ENCODE measurements at regions of chr4 and their contacts with region 1.

Region 1: DNA sequence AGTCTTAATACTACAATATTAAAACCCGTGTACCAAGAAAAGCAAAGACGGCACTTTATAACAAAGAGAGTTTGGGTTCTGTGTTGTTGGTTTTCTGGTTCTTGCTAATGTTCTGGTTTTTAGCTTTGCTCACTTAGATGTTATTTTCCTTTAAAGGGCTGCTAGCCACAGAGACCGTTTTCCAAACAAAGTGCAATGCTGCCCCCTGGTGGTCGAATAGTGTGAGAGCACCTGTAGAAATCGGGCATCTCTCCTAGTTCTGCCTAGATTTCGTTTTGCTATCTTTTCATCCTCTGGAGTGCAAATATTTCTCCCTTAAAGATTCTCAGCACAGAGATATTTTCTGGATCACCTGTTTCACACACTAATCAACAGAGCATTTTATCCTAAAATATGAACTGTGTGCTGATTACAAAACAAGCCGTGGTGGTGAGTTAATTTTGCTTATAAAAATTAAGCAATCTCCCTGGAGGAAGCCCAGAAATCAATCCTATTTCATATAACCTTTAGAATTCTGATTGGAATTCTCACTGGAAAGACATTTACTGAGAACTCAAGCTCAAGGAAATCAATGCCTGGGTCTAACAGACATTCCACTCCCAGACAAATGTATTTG is 334.5 kb upstream of the NOCT start:
- DNase-seq: peak; percentile 50
- H3K4me3 Mint-ChIP-seq: no peak overlapping the region
- H3K27ac Mint-ChIP-seq: no peak overlapping the region
- H3K4me1 Mint-ChIP-seq: no peaks in the 10 kb centered on the region
- H3K27me3 Mint-ChIP-seq: peaks cover 15% of the 10 kb centered on the region

Region 2: DNA sequence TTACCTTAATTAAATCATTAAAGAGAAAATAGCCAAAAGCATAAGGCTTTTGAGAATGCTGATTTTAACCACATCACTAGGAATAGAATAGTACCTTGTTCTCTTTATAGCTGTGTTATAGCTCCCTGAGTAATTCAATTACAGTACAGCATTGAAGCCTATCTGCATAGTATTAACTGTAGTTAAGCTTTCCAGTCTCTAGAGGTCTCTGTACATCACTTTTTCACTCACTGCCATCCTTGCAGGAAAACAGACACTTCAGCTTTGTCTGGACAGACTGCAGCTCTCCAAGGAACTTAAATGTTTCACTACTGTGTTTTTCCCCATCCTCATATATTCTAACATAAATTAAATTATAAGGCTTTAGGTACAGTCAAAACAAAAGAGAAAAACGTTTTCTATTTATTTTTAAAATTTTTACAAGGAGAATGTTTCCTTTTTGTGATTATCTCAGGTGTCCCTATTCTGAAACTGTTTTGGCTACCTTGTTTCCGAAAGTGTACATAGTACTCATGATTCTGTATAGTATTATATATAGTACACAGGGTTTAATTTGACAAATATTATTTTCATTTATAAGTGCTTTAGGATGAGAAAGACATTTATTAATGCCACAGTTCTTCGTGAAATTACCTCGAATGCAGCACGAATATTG is 1556.7 kb before region 1 on chr4:
- intact Hi-C with region 1: loop called (anchors 2 kb)
- DNase-seq: no peak
- H3K4me3 Mint-ChIP-seq: no peak overlapping the region
- H3K27ac Mint-ChIP-seq: no peak overlapping the region
- H3K4me1 Mint-ChIP-seq: no peaks in the 10 kb centered on the region
- H3K27me3 Mint-ChIP-seq: no peaks in the 10 kb centered on the region

Region 3: GRCh38 chr4:137819964-137820383 is 861.1 kb before region 1 on chr4:
- intact Hi-C with region 1: loop called (anchors 5 kb)
- DNase-seq: no peak
- H3K4me3 Mint-ChIP-seq: no peak overlapping the region
- H3K27ac Mint-ChIP-seq: no peak overlapping the region
- H3K4me1 Mint-ChIP-seq: no peaks in the 10 kb centered on the region
- H3K27me3 Mint-ChIP-seq: no peaks in the 10 kb centered on the region

Region 4: DNA sequence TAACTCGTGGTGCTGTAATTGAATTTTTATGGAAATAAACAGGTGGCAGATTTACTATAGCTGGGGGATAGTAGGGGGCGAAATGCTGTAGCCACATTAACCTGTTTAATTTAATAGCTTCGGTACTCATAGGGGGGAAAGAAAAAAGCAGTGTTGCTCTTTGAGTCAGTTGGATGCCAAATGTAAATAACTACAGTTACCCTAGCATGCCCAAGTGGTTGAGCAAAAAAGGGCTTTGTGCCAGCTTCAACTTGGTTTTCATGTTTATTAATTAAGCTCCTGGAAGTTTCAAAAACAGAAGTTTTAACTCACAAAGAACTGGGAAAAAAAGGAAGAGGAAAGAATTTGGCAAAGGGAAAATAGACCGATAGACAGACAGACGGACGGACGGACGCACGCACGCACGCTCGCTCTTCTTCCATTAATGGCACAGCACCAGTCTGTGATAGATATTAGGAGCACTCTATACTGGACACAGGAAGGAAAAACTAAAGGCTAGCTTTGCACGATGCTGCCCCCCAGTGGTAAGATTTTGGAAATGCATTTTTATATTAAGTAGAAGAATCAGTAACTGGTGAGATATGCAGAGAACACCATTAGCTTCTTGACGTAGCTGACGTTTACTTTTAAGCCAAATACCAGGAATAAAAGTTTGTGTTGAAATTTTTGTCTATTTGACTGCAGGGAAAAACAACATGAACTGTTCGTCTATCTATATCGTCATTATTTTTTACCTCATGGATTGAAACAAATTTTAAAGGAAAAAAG is 590.8 kb before region 1 on chr4:
- intact Hi-C with region 1: loop called (anchors 1 kb)
- DNase-seq: peak; percentile 5
- H3K4me3 Mint-ChIP-seq: no peak overlapping the region
- H3K27ac Mint-ChIP-seq: no peak overlapping the region
- H3K4me1 Mint-ChIP-seq: no peaks in the 10 kb centered on the region
- H3K27me3 Mint-ChIP-seq: no peaks in the 10 kb centered on the region

Measured in activated T-helper 1 cell treated with anti-CD3 and anti-CD28 coated beads, Interleukin-12 subunit alpha, Interleukin-12 subunit beta, Interleukin-2, Interleukin-4 antibody, amounts not matched to agents 30 ng/mL and 10 ng/mL and 1 ng/mL, durations not matched to agents 14 hours and 24 hours and 36 hours (primary cell).